ENCODE measurements at regions of chr14 and their contacts with region 1.

Region 1: DNA sequence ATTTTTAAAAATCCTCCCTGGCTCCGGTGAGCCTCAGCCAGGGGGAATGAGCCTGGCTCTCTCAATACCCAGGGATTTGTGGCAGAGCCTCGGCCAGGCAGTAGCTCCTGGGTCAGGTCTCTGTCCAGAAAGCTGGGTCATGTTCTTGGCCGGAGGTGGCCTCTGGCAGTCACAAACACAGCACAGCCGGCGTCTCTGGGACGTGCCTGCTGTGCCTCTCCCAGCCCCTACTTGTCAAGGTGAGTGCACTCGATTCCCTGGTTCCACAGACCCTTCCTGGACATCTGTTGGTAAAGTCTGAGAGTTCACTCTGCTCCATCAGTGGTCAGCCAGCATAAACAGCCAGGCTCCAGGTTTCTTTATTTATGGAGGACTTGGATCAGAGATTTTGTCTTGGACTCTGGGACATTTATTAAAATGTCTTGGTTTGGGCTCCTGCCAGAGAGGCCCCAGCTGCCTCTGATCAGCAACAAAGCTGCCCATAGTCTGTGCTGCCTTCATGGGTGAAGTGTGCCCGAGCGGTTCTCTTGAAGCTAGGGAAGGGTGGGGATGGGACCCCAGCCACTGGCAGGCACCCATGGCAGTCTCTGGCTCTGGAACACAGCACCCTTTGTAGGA is 56.7 kb downstream of the DGLUCY start:
- DNase-seq: no peak
- ATAC-seq: no peak
- H3K4me3 Mint-ChIP-seq: no peak overlapping the region
- H3K27ac Mint-ChIP-seq: no peak overlapping the region
- H3K4me1 Mint-ChIP-seq: no peaks in the 10 kb centered on the region
- H3K27me3 Mint-ChIP-seq: no peaks in the 10 kb centered on the region
- CTCF ChIP-seq: no peak

Region 2: GRCh38 chr14:90903101-90903500 is 267.5 kb before region 1 on chr14:
- CTCF ChIA-PET with region 1: interaction called, 43 read pairs
- POLR2A ChIA-PET with region 1: no interaction called
- DNase-seq: peak; percentile 45
- ATAC-seq: peak; percentile 92
- H3K4me3 Mint-ChIP-seq: no peak overlapping the region
- H3K27ac Mint-ChIP-seq: no peak overlapping the region
- H3K4me1 Mint-ChIP-seq: peaks cover 8% of the 10 kb centered on the region
- H3K27me3 Mint-ChIP-seq: no peaks in the 10 kb centered on the region
- CTCF ChIP-seq: peak; percentile 40; the same call in 1 of the 2 replicates

Region 3: GRCh38 chr14:91094772-91095171 is 75.8 kb before region 1 on chr14:
- CTCF ChIA-PET with region 1: no interaction called
- POLR2A ChIA-PET with region 1: no interaction called
- DNase-seq: no peak
- ATAC-seq: no peak
- H3K4me3 Mint-ChIP-seq: no peak overlapping the region
- H3K27ac Mint-ChIP-seq: no peak overlapping the region
- H3K4me1 Mint-ChIP-seq: no peaks in the 10 kb centered on the region
- H3K27me3 Mint-ChIP-seq: no peaks in the 10 kb centered on the region
- CTCF ChIP-seq: no peak